PC-9 (cell line): ENCODE measurements at regions of chr5 and their contacts with region 1.

Region 1: GRCh38 chr5:72179028-72179815 is 71.9 kb downstream of the MAP1B start:
- DNase-seq: peak; percentile 66 to 90
- H3K4me3 ChIP-seq: no peak overlapping the region
- H3K27ac ChIP-seq: peak overlapping the region; percentile 62
- H3K4me1 ChIP-seq: peaks cover 5% of the 10 kb centered on the region; the same call in 1 of the 2 replicates
- H3K27me3 ChIP-seq: no peaks in the 10 kb centered on the region
- CTCF ChIP-seq: no peak

Region 2: DNA sequence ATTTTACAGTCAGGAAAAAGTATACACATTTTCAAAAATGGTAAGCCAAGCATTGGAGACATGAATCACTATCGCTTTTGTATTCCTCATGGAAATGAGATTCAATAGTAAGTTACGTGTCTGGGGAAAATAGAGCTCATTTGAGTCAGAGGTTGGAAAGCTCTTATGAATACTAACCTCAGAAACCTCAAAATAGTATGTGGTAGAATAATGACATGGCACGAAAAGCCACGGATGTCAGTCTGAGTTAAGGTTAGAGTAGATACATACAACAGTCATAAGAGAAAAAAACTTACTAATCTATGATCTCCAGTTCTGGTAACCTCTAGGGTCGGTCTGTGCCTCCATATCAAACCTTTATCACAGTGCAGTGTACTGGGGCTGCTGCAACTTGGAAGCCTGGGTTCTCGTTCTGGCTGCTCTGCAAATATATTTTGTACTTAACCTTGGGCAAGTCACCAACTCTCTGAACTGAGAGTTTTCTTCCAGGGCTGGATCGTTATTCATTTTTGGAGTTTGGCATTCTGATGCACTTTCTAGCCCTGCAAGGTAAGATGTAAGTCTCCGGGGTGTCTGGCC is 40.2 kb before region 1 on chr5:
- CTCF ChIA-PET with region 1: interaction called, 4 read pairs
- POLR2A ChIA-PET with region 1: no interaction called
- intact Hi-C with region 1: loop called (anchors 1 kb)
- DNase-seq: no peak
- H3K4me3 ChIP-seq: no peak overlapping the region
- H3K27ac ChIP-seq: no peak overlapping the region
- H3K4me1 ChIP-seq: peaks cover 27% of the 10 kb centered on the region
- H3K27me3 ChIP-seq: no peaks in the 10 kb centered on the region
- CTCF ChIP-seq: no peak

Region 3: GRCh38 chr5:72234265-72234700 is 55.1 kb after region 1 on chr5:
- CTCF ChIA-PET with region 1: no interaction called
- POLR2A ChIA-PET with region 1: interaction called, 3 read pairs
- intact Hi-C with region 1: loop called (anchors 1 kb)
- DNase-seq: peak; percentile 25 to 95
- H3K4me3 ChIP-seq: peak overlapping the region; percentile 25; the same call in 1 of the 2 replicates
- H3K27ac ChIP-seq: peak overlapping the region; percentile 99
- H3K4me1 ChIP-seq: peaks cover 52% of the 10 kb centered on the region
- H3K27me3 ChIP-seq: no peaks in the 10 kb centered on the region
- CTCF ChIP-seq: no peak